Ovary (tissue), 10 donors: ENCODE measurements at regions of chr6 and their contacts with region 1.

Region 1: DNA sequence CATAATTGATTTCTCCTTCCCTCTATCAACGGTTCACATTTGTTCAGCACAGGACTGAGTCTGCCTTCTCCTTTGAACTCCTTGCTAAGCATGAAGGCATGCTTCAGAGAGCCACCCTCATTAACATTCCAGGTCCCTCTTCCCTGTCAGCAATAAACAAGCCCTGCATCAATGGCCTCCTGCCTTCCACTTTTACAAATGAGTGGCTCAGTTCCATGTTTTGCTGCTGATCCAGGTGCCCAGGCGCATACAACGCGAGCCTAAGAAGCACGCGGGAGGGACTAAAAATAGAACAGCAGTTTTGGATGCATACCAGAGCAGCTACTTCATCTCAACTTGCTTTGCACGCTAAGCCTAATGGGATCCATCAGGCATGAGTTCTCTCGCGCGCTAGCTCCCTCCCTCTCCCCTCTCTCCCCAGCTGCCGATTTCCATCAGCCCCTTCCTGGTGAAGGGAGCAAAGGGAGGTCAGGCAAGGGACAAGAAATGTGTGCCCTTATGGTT is 53.4 kb downstream of the TRAF3IP2 start:
- DNase-seq: peak; percentile 70 to 80 (median 77)
- H3K4me3 ChIP-seq: no peak overlapping the region
- H3K27ac ChIP-seq: peak overlapping the region; percentile 35 to 58
- H3K4me1 ChIP-seq: peaks cover 14% of the 10 kb centered on the region
- H3K27me3 ChIP-seq: no peaks in the 10 kb centered on the region
- CTCF ChIP-seq: no peak
- EP300 ChIP-seq: no peak
- POLR2A ChIP-seq: no peak

Region 2: GRCh38 chr6:111605100-111605751 is 52.9 kb after region 1 on chr6:
- intact Hi-C with region 1: loop called in 1 of 4 experiments (anchors 10 kb)
- DNase-seq: peak; percentile 76 to 85 (median 81)
- H3K4me3 ChIP-seq: peak overlapping the region; percentile 45
- H3K27ac ChIP-seq: peak overlapping the region; percentile 89 to 97
- H3K4me1 ChIP-seq: peaks cover 18% of the 10 kb centered on the region
- H3K27me3 ChIP-seq: no peaks in the 10 kb centered on the region
- CTCF ChIP-seq: no peak
- EP300 ChIP-seq: no peak
- POLR2A ChIP-seq: peak; percentile 65

Region 3: DNA sequence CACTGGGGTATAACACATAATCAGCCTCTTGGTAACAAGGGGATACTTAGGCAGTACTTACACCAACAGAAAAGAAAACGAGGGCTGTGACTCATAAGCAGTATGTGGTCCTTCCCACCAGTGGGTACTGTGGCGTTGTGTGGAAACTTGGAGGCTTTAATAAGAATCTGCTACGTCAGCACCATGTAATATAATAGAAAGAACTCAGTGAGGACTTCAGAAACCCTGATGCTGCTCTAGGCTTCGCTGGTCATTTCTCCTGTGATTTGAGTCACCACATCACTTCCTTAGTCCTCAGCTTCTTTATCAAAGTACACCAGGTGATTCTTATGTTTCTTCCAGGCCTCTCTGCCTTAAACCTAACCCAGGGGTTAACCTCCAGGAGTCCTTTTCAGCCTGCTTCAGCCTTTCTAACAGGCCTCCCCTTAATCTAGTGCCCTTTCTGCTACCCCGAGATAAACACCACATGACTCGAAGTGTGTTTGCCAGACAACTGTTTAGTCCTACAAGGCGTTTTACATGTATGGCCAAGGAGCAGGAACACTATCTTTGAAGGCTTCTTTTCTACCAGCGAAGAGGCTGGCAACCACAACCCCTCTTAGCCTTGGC is 252.4 kb after region 1 on chr6:
- intact Hi-C with region 1: no loop called
- DNase-seq: no peak
- H3K4me3 ChIP-seq: no peak overlapping the region
- H3K27ac ChIP-seq: peak overlapping the region in 1 of 2 donors; percentile 1
- H3K4me1 ChIP-seq: peaks cover 4% of the 10 kb centered on the region
- H3K27me3 ChIP-seq: no peaks in the 10 kb centered on the region
- CTCF ChIP-seq: no peak
- EP300 ChIP-seq: no peak
- POLR2A ChIP-seq: no peak